ENCODE measurements at regions of chr11 and their contacts with region 1.

Region 1: DNA sequence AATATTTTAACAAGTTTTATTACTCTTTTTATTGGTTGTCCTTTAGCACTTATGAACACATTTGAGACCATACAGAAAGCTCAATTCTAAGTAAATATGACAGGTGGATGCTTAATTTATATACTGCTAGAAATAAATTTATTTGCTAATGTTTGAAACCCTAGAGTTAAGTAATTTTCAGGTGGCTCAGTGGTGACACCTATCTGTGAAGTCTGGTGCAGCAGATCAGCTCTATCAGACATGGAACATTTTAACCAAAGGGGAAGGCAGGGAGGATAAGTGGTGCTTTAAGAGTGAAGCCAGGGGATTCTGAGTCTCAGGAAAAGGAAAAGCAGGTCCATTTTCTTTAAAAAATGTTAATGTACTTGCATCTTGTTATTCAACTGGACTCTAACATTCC is 175.8 kb downstream of the DSCAML1 start:
- DNase-seq: no peak
- ATAC-seq: peak; percentile 65
- H3K4me3 ChIP-seq: no peak overlapping the region
- H3K27ac ChIP-seq: no peak overlapping the region
- H3K4me1 ChIP-seq: no peaks in the 10 kb centered on the region
- H3K27me3 ChIP-seq: no peaks in the 10 kb centered on the region; a peak in 1 of 4 replicates
- CTCF ChIP-seq: peak; percentile 37 to 68 (median 65)
- EP300 ChIP-seq: no peak
- POLR2A ChIP-seq: no peak
- RAD21 ChIP-seq: peak; percentile 44

Region 2: GRCh38 chr11:117443266-117444195 is 177.7 kb before region 1 on chr11:
- CTCF ChIA-PET with region 1: interaction called, 18 read pairs
- POLR2A ChIA-PET with region 1: no interaction called
- RAD21 ChIA-PET with region 1: no interaction called
- SMC1A ChIA-PET with region 1: interaction called, 5 read pairs
- in situ Hi-C with region 1: no loop called
- intact Hi-C with region 1: no loop called
- DNase-seq: no peak
- ATAC-seq: peak; percentile 91
- H3K4me3 ChIP-seq: no peak overlapping the region
- H3K27ac ChIP-seq: no peak overlapping the region
- H3K4me1 ChIP-seq: no peaks in the 10 kb centered on the region
- H3K27me3 ChIP-seq: no peaks in the 10 kb centered on the region; a peak in 1 of 4 replicates
- CTCF ChIP-seq: peak; percentile 35 to 76 (median 58); a peak in 4 of 6 replicates
- EP300 ChIP-seq: no peak
- POLR2A ChIP-seq: no peak
- RAD21 ChIP-seq: peak; percentile 83

Region 3: GRCh38 chr11:117610045-117610444 is 11.2 kb before region 1 on chr11:
- CTCF ChIA-PET with region 1: interaction called, 29 read pairs
- POLR2A ChIA-PET with region 1: interaction called, 5 read pairs
- RAD21 ChIA-PET with region 1: interaction called, 7 read pairs
- SMC1A ChIA-PET with region 1: interaction called, 15 read pairs
- in situ Hi-C with region 1: no loop called
- intact Hi-C with region 1: no loop called
- DNase-seq: peak; percentile 70
- ATAC-seq: peak; percentile 47
- H3K4me3 ChIP-seq: peak overlapping the region; percentile 28; the same call in 1 of the 2 replicates
- H3K27ac ChIP-seq: peak overlapping the region; percentile 17; the same call in 1 of the 2 replicates
- H3K4me1 ChIP-seq: peaks cover 37% of the 10 kb centered on the region
- H3K27me3 ChIP-seq: no peaks in the 10 kb centered on the region
- CTCF ChIP-seq: 0 out of 6 replicates have a peak, but pooled peaks of 1 of the 3 experiments have one; percentile 2
- EP300 ChIP-seq: peak in 1 of 2 experiments; percentile 71; a peak in 1 of 4 replicates
- POLR2A ChIP-seq: no peak
- RAD21 ChIP-seq: no peak

Region 4: GRCh38 chr11:117657794-117658193 is 36.6 kb after region 1 on chr11:
- CTCF ChIA-PET with region 1: interaction called, 11 read pairs
- POLR2A ChIA-PET with region 1: no interaction called
- RAD21 ChIA-PET with region 1: no interaction called
- SMC1A ChIA-PET with region 1: no interaction called
- in situ Hi-C with region 1: no loop called
- intact Hi-C with region 1: no loop called
- DNase-seq: no peak
- ATAC-seq: no peak
- H3K4me3 ChIP-seq: no peak overlapping the region
- H3K27ac ChIP-seq: no peak overlapping the region
- H3K4me1 ChIP-seq: no peaks in the 10 kb centered on the region
- H3K27me3 ChIP-seq: peaks cover 4 to 5% of the 10 kb centered on the region in 2 experiments
- CTCF ChIP-seq: no peak
- EP300 ChIP-seq: no peak
- POLR2A ChIP-seq: no peak
- RAD21 ChIP-seq: no peak

Measured in GM12878 (cell line).